ENCODE measurements at regions of chr1 and their contacts with region 1.

Region 1: GRCh38 chr1:167517535-167518330 is 596 bp downstream of the CD247 start:
- DNase-seq: peak; percentile 95
- H3K4me3 Mint-ChIP-seq: peak overlapping the region; percentile 90
- H3K27ac Mint-ChIP-seq: peak overlapping the region; percentile 96
- H3K4me1 Mint-ChIP-seq: peaks cover 25% of the 10 kb centered on the region
- H3K27me3 Mint-ChIP-seq: no peaks in the 10 kb centered on the region

Region 2: DNA sequence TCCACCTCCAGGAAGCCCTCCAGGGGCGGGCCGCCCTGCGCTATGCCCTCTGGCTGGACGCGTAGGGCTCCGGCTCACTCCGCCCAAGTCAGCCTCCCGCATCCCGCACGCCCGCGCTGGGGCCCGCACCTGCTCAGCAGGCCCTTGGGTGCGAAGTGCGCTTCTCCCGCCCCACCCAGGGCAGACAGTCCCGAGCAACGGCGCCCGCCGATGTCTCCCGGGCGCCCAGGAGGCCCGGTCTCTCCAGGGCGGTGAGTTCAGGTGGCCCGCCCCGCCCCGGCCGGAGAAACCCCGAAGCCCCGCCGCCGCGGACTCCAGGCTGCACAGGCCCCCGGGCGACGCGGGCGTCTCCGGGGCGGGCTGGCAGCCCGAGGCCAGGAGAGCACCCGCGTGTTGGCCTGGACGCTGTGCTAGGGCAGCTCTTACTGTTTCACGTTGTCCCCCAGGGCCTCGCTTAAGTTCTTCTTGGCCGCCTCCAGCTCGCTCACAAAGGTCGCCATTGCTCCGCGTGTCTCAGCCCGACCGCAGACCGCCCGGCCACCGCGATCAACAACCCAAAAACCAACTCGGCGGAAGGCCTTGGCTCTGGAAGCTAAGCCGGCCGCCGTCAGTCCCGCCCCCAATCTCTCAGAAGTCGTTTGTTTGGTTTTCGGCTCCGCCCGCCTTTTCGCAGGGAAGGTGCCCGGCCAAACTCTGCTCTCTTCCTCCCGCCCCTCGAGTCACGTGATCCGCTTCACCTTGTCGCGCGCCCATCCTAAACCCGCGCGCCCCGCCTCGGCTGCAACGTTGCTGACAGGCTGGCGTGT is 641.8 kb before region 1 on chr1 and contains the start of gene TADA1:
- CTCF ChIA-PET with region 1: no interaction called
- intact Hi-C with region 1: loop called (anchors 10 kb)
- DNase-seq: peak; percentile 100
- H3K4me3 Mint-ChIP-seq: peak within 1 kb of the TSS; percentile 99
- H3K27ac Mint-ChIP-seq: peak within 1 kb of the TSS; percentile 97
- H3K4me1 Mint-ChIP-seq: peaks cover 37% of the 10 kb centered on the region
- H3K27me3 Mint-ChIP-seq: no peaks in the 10 kb centered on the region
- total RNA-seq, gene TADA1: 19.6 to 19.9 TPM

Region 3: DNA sequence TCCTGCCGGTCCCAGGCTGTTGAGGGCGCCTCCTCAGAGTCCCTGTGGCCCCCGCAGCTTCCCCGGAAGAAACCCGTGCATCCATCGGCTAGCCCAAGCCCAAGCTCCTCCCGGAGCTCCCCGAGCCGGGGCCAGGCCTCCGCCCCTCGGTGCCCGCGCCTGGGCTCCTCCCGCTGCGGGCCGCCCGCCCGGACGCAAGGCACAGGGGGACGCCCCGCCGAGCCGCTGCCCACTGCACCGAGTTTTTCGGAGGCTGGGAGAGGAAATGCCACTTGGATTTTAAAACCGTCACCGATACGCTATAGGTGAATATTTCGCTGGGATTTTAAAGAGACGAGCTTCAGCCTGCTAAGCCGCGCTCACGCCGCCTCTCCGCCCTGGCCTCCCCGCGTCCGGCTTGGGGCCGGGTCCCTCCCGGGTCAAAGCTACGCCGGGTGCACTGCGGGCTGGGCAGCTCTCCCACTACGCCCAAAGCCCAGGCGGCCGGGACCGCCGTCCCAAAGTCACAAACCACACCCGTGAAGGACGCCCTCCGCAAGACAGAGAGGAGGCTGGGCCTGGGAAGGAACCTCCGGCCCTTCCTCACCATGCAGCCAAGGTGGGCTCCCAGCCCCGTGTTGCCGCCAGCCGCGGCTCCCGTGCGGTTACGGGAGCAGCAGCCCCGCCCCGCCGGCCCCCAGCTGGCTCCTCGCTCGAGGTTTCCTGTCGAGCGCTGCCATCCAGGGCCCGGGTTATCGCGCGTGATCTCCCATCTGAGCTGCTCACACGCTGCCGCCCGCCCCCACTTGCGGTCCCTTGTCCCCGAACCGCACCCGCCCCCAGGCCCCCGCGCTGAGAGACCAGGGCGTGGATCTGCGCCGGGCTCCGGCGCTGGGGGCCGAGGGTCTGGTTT is 62.6 kb before region 1 on chr1:
- CTCF ChIA-PET with region 1: interaction called, 33 read pairs
- intact Hi-C with region 1: loop called (anchors 1 kb)
- DNase-seq: peak; percentile 83
- H3K4me3 Mint-ChIP-seq: peak overlapping the region; percentile 79
- H3K27ac Mint-ChIP-seq: peak overlapping the region; percentile 87
- H3K4me1 Mint-ChIP-seq: peaks cover 67% of the 10 kb centered on the region
- H3K27me3 Mint-ChIP-seq: no peaks in the 10 kb centered on the region

Region 4: GRCh38 chr1:167491586-167492461 is 25.9 kb before region 1 on chr1:
- CTCF ChIA-PET with region 1: interaction called, 8 read pairs
- intact Hi-C with region 1: loop called (anchors 1 kb)
- DNase-seq: peak; percentile 60
- H3K4me3 Mint-ChIP-seq: peak overlapping the region; percentile 69
- H3K27ac Mint-ChIP-seq: peak overlapping the region; percentile 92
- H3K4me1 Mint-ChIP-seq: peaks cover 94% of the 10 kb centered on the region
- H3K27me3 Mint-ChIP-seq: no peaks in the 10 kb centered on the region

Region 5: GRCh38 chr1:167528057-167528728 is 10.5 kb after region 1 on chr1:
- CTCF ChIA-PET with region 1: interaction called, 56 read pairs
- intact Hi-C with region 1: loop called (anchors 1 kb)
- DNase-seq: no peak
- H3K4me3 Mint-ChIP-seq: no peak overlapping the region
- H3K27ac Mint-ChIP-seq: no peak overlapping the region
- H3K4me1 Mint-ChIP-seq: peaks cover 5% of the 10 kb centered on the region
- H3K27me3 Mint-ChIP-seq: peaks cover 2% of the 10 kb centered on the region

Region 6: GRCh38 chr1:167715157-167715999 is 197.6 kb after region 1 on chr1:
- CTCF ChIA-PET with region 1: no interaction called
- intact Hi-C with region 1: no loop called
- DNase-seq: peak; percentile 95
- H3K4me3 Mint-ChIP-seq: peak overlapping the region; percentile 79
- H3K27ac Mint-ChIP-seq: peak overlapping the region; percentile 92
- H3K4me1 Mint-ChIP-seq: peaks cover 28% of the 10 kb centered on the region
- H3K27me3 Mint-ChIP-seq: peaks cover 5% of the 10 kb centered on the region

Region 7: DNA sequence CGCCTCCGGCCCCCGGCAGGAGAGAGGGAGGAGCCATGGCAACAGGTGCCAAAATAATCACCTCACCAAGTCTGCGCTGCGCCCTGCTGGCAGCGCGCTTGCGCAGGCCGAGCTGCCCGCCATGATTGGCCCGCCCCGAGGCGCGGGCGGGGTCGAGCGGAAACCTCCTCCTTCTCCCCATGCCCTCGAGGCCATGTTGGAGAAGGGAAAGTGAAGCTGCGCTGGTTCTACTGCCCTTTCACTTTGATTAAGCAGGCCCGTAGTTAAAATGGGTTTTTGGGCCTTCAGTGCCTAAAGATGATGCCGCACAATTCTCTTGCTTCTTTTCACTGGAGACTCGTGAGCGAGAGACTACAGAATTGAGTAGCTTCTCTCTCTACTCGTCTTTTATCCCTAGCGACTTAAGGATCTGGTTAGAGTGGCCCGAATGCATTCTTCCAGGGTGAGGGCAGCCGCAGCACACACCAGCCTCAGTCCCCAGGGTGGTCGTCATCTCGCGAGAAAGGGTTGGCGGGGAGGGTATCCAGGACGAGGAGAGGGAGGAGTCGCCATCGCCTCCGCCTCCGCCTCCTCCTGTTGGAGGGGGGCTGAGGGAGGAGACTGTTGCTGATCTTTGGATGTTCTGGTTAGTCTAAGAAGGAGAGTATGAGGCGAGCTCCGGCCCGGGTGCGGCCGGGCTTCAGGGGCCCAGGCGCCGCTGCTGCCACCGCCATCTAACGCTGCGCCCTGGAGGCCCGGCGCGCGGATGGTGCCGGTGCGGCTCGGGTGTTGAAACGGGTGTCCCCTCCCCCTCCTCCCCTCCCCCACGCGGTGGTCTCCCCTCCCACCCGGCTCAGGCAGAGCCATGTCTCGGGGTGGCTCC is 418.6 kb after region 1 on chr1 and contains the start of gene DCAF6:
- CTCF ChIA-PET with region 1: no interaction called
- intact Hi-C with region 1: loop called (anchors 5 kb)
- DNase-seq: peak; percentile 97
- H3K4me3 Mint-ChIP-seq: peak within 1 kb of the TSS; percentile 85
- H3K27ac Mint-ChIP-seq: peak within 1 kb of the TSS; percentile 100
- H3K4me1 Mint-ChIP-seq: peaks cover 32% of the 10 kb centered on the region
- H3K27me3 Mint-ChIP-seq: no peaks in the 10 kb centered on the region
- total RNA-seq, gene DCAF6: 15.4 to 15.9 TPM